Activated T-helper 1 cell treated with anti-CD3 and anti-CD28 coated beads, Interleukin-12 subunit alpha, Interleukin-12 subunit beta, Interleukin-2, Interleukin-4 antibody, amounts not matched to agents 30 ng/mL and 10 ng/mL and 1 ng/mL, durations not matched to agents 14 hours and 24 hours and 36 hours (primary cell): ENCODE measurements at regions of chr7 and their contacts with region 1.

Region 1: GRCh38 chr7:43439631-43440401 is 143.1 kb upstream of the STK17A start:
- DNase-seq: peak; percentile 28
- H3K4me3 Mint-ChIP-seq: no peak overlapping the region
- H3K27ac Mint-ChIP-seq: no peak overlapping the region
- H3K4me1 Mint-ChIP-seq: no peaks in the 10 kb centered on the region
- H3K27me3 Mint-ChIP-seq: peaks cover 3% of the 10 kb centered on the region

Region 2: DNA sequence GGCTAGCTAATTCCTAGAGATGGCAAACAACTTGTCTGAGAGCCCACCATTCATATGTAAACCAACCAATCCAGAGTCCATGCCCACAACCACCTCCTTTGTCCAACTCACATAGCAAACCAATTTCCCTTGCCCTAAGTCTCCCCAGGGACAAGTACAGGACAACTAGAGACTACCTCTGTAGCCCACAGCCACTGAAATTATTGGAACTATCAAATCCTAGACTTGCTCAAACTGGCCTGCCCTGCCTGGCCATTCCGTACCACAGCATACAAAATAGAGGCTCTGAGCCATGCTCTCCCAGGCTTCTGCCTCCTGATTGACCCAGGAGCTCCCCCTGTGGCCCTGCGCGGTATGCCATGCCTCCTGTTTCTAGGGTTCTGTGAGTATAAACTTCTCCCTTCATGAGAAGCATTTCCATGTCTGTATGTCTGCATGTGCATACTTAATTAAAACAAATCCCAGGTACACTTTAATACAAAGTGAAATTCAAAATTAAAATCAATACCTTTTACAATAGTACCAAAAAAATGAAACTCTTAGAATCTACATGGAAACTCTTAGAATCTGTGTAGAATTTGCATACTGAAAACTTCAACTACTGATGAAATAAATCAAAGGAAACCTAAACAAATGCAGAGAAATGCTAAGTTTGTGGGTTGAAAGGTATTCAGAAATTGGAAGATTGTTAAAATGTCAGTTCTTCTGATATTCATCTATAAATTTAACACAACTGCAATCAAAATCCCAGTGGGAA is 331.4 kb before region 1 on chr7:
- intact Hi-C with region 1: loop called (anchors 10 kb)
- DNase-seq: peak; percentile 24
- H3K4me3 Mint-ChIP-seq: no peak overlapping the region
- H3K27ac Mint-ChIP-seq: no peak overlapping the region
- H3K4me1 Mint-ChIP-seq: peaks cover 7% of the 10 kb centered on the region
- H3K27me3 Mint-ChIP-seq: peaks cover 49% of the 10 kb centered on the region